CD8-positive, alpha-beta T cell (primary cell): ENCODE measurements at regions of chr5 and their contacts with region 1.

Region 1: GRCh38 chr5:14581333-14581890 is at the start of gene OTULINL:
- DNase-seq: peak; percentile 76 to 94 (median 90)
- ATAC-seq: peak; percentile 88
- H3K4me3 ChIP-seq: peak within 1 kb of the TSS; percentile 69 to 82
- H3K4me3 Mint-ChIP-seq: peak within 1 kb of the TSS; percentile 88
- H3K27ac ChIP-seq: peak within 1 kb of the TSS; percentile 75 to 82
- H3K27ac Mint-ChIP-seq: peak within 1 kb of the TSS; percentile 94
- H3K4me1 ChIP-seq: peaks cover 37% of the 10 kb centered on the region
- H3K4me1 Mint-ChIP-seq: peaks cover 43% of the 10 kb centered on the region
- H3K27me3 ChIP-seq: no peaks in the 10 kb centered on the region
- H3K27me3 Mint-ChIP-seq: no peaks in the 10 kb centered on the region
- CTCF ChIP-seq: no peak
- total RNA-seq, gene OTULINL: 91.8 to 93.1 TPM

Region 2: DNA sequence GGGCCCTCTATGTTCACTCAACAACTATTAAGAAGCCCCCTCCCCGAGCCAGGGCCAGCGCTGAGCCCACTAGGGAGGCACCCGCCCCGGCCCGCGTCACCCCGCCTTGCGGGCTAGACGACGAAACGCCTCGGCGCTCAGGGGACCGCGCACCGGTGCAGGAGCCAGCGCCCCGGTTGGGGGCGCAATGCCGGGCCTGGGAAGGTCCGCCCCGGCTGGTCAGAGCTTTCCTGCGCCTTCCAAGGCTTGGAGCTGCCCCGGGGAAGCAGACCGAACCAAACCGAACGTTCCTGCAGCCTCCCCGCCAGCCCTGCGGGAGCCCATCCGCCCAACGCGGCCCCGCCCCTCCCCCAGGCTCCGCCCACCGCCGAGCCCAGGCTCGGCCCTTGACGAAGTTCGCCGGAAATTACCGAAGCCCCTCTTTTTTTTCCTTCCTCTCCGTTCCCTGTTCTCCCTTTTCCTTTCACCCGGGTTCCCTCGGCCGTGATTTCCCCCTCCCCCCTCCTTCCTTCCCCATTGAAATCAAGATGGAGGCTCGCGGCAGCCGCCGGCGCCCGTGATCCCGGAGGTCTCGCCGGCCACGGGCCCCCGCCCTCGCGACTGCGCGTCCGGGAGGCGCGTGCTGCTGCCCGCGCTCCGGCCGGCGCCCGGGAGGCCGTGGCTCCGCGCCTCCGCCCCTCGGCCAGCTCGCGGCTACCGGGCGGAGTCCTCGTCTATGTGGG is 438.4 kb before region 1 on chr5 and contains the start of gene TRIO:
- CTCF ChIA-PET with region 1: no interaction called
- POLR2A ChIA-PET with region 1: no interaction called
- intact Hi-C with region 1: loop called (anchors 10 kb)
- DNase-seq: peak; percentile 32 to 88 (median 77)
- ATAC-seq: peak; percentile 71
- H3K4me3 ChIP-seq: peak within 1 kb of the TSS; percentile 56 to 93
- H3K4me3 Mint-ChIP-seq: peak within 1 kb of the TSS; percentile 84
- H3K27ac ChIP-seq: no peak within 1 kb of the TSS
- H3K27ac Mint-ChIP-seq: no peak within 1 kb of the TSS
- H3K4me1 ChIP-seq: peaks cover 13% of the 10 kb centered on the region
- H3K4me1 Mint-ChIP-seq: peaks cover 11% of the 10 kb centered on the region
- H3K27me3 ChIP-seq: peaks cover 0 to 3% of the 10 kb centered on the region in 2 experiments
- H3K27me3 Mint-ChIP-seq: peaks cover 40% of the 10 kb centered on the region
- CTCF ChIP-seq: peak; percentile 31
- total RNA-seq, gene TRIO: 3.4 to 6.5 TPM

Region 3: GRCh38 chr5:14410394-14411201 is 170.8 kb before region 1 on chr5:
- CTCF ChIA-PET with region 1: interaction called, 8 read pairs
- POLR2A ChIA-PET with region 1: interaction called, 5 read pairs
- intact Hi-C with region 1: loop called (anchors 2 kb)
- DNase-seq: no peak
- ATAC-seq: no peak
- H3K4me3 ChIP-seq: no peak overlapping the region
- H3K4me3 Mint-ChIP-seq: no peak overlapping the region
- H3K27ac ChIP-seq: no peak overlapping the region
- H3K27ac Mint-ChIP-seq: no peak overlapping the region
- H3K4me1 ChIP-seq: peaks cover 31% of the 10 kb centered on the region
- H3K4me1 Mint-ChIP-seq: peaks cover 35% of the 10 kb centered on the region
- H3K27me3 ChIP-seq: no peaks in the 10 kb centered on the region
- H3K27me3 Mint-ChIP-seq: no peaks in the 10 kb centered on the region
- CTCF ChIP-seq: no peak

Region 4: DNA sequence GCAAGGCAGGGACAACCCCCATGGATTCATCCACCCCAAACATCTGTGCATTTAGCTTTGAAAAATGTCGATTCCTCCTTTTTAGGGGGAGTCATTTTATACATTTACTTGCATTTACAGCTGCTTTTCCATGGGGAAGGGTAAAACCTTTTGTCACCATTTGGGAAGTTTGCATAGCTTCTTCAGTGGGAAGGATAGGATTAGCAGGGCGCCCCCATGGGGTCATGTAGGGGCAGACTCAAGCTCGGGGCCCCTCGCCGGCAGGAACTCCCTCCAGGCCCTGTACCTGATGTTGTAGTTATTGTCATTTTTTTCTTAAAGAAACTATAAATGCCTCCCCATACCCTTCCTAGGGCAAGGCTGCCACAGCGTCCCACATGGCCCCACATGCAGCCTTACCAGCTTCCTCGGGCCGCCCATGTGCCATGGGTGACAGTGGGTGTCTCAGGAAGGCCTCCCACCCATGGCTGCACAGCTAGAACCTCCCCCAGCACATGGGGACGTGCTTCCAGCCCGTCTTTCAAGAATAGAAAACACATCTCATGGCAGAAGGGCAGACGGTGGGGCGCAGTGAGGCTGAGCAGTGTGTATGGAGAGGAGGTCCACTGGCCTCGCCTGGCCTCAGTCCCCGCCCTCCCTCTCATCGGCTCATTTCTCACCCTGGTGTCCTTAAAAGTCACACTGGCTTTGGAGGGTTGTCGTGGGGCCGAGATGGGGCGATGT is 75.9 kb before region 1 on chr5:
- CTCF ChIA-PET with region 1: no interaction called
- POLR2A ChIA-PET with region 1: no interaction called
- intact Hi-C with region 1: no loop called
- DNase-seq: no peak
- ATAC-seq: no peak
- H3K4me3 ChIP-seq: no peak overlapping the region
- H3K4me3 Mint-ChIP-seq: no peak overlapping the region
- H3K27ac ChIP-seq: no peak overlapping the region
- H3K27ac Mint-ChIP-seq: no peak overlapping the region
- H3K4me1 ChIP-seq: no peaks in the 10 kb centered on the region
- H3K4me1 Mint-ChIP-seq: no peaks in the 10 kb centered on the region
- H3K27me3 ChIP-seq: no peaks in the 10 kb centered on the region
- H3K27me3 Mint-ChIP-seq: no peaks in the 10 kb centered on the region
- CTCF ChIP-seq: no peak

Region 5: DNA sequence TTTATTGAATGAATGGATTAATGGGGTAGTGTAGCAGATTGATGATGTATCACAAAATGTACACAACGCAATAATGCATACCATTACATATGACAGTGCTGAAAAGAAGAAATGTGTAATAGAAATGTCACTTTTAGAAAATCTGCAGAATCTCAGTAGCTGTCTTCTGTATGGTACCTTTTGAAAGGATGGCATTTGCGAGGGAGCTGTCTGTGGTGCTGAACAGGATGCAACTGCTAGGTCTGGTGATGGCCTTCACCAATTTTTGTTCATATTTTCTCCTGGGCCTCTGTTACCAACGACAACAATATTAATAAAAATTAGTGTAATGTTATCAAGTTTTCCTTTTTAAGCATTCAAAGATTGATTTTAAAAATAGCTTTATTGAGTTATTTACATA is 46.9 kb after region 1 on chr5:
- CTCF ChIA-PET with region 1: no interaction called
- POLR2A ChIA-PET with region 1: no interaction called
- intact Hi-C with region 1: loop called in 1 of 2 experiments (anchors 5 kb)
- DNase-seq: peak; percentile 28 to 70 (median 65)
- ATAC-seq: peak; percentile 72
- H3K4me3 ChIP-seq: no peak overlapping the region
- H3K4me3 Mint-ChIP-seq: no peak overlapping the region
- H3K27ac ChIP-seq: no peak overlapping the region
- H3K27ac Mint-ChIP-seq: no peak overlapping the region
- H3K4me1 ChIP-seq: no peaks in the 10 kb centered on the region
- H3K4me1 Mint-ChIP-seq: no peaks in the 10 kb centered on the region
- H3K27me3 ChIP-seq: no peaks in the 10 kb centered on the region
- H3K27me3 Mint-ChIP-seq: peaks cover 2% of the 10 kb centered on the region
- CTCF ChIP-seq: no peak

Region 6: GRCh38 chr5:14664302-14665100 is 83.1 kb after region 1 on chr5 and contains the start of gene OTULIN:
- CTCF ChIA-PET with region 1: no interaction called
- POLR2A ChIA-PET with region 1: no interaction called
- intact Hi-C with region 1: loop called (anchors 1 to 5 kb)
- DNase-seq: peak; percentile 62 to 96 (median 85)
- ATAC-seq: peak; percentile 65
- H3K4me3 ChIP-seq: peak within 1 kb of the TSS; percentile 60 to 65
- H3K4me3 Mint-ChIP-seq: peak within 1 kb of the TSS; percentile 95
- H3K27ac ChIP-seq: peak within 1 kb of the TSS; percentile 75 to 89
- H3K27ac Mint-ChIP-seq: peak within 1 kb of the TSS; percentile 97
- H3K4me1 ChIP-seq: peaks cover 50% of the 10 kb centered on the region
- H3K4me1 Mint-ChIP-seq: peaks cover 69% of the 10 kb centered on the region
- H3K27me3 ChIP-seq: no peaks in the 10 kb centered on the region
- H3K27me3 Mint-ChIP-seq: no peaks in the 10 kb centered on the region
- CTCF ChIP-seq: no peak
- total RNA-seq, gene OTULIN: 135 to 140 TPM

Region 7: DNA sequence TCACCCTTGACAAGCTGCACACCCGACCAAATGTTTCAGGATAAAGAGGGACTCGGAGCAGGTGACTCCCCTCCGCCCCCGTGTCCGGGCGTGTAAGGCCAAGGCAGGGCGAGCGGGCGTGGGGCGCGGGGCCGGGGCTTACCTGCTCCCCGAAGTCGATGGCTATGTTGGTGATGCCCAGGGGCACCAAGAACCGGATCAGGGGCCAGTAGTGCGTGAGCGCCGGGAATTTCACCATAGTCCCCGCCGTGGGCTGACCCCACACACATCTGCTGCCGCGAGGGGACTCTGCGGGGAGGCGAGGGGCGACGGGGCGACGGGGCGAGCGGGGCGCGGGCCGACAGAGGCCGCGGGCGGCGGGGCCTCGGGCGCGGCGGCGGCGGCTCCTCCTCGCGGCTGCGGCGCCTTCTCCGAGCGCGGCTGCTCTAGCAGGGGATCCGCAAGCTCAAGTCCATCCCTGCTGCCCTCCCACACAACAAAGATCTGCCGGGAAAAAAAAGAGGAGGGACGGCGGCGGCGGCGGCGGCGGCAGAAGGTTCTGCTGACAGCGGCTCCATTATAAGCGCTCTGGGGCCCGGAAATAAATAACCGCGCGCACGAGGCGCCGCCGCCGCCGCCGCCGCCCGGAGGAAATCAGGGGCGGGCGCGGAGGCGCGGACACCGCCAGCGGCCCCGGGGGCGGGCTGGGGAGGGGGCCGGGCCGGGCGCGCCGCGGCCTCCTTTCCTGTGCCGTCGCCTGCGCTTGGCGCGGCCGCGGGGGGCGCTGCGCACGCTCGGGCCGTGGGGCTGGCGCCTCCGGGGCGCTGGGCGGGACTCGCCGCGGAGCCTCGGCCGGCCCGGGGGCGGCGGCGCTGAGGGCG is 290.0 kb after region 1 on chr5 and contains the start of gene ANKH:
- CTCF ChIA-PET with region 1: no interaction called
- POLR2A ChIA-PET with region 1: no interaction called
- intact Hi-C with region 1: loop called (anchors 5 kb)
- DNase-seq: peak; percentile 66 to 93 (median 81)
- ATAC-seq: peak; percentile 81
- H3K4me3 ChIP-seq: peak within 1 kb of the TSS; percentile 63 to 78
- H3K4me3 Mint-ChIP-seq: peak within 1 kb of the TSS; percentile 95
- H3K27ac ChIP-seq: peak within 1 kb of the TSS; percentile 63 to 66
- H3K27ac Mint-ChIP-seq: peak within 1 kb of the TSS; percentile 94
- H3K4me1 ChIP-seq: peaks cover 13% of the 10 kb centered on the region
- H3K4me1 Mint-ChIP-seq: peaks cover 38% of the 10 kb centered on the region
- H3K27me3 ChIP-seq: no peaks in the 10 kb centered on the region
- H3K27me3 Mint-ChIP-seq: no peaks in the 10 kb centered on the region
- CTCF ChIP-seq: no peak
- total RNA-seq, gene ANKH: 56.0 to 57.7 TPM

Region 8: DNA sequence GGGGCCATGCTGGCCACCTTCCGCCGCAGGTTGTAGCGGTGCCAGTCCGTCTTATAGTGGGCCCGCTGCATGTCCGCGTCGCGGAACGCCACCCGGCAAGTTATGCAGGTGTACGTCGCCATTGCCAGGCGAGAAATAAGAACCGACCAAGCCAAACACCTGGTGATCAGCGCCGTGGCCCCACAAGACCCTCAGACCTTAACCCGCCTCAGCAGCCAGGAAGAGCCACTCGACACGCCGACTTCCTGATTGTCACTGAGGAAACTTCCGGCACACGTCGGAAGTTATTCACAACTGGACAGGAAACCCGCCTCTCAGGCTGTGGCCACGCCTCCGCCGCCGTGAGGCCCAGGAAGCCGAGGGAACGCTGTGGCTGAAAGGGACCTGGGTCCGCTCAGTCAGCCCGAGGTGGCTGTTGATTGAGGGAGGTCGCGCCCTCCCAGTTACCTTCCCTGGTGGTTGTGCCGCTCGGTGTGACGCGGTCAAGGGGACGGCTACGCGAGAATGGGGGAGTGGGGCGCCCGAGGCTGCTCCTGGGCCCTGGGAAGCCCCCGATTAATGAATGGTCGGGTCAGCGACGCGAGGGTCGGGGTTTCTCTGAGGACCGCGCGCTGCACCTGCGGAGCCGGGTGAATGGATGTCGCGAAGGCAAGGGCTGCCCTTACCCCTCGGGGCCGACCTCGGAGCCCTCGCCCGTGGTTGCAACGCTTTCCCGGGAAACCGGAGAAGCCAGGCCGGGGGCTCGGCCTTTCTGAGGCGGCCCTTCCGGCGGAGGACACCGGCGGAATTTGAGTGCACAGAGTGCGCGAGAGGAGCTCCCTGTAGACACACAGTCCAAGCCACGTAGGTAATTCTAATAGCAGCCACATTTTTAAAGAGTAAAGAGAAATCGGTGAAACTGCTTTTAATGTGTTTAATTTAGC is 1884.4 kb after region 1 on chr5 and contains the start of gene ZNF622:
- CTCF ChIA-PET with region 1: no interaction called
- POLR2A ChIA-PET with region 1: no interaction called
- intact Hi-C with region 1: loop called in 1 of 2 experiments (anchors 10 kb)
- DNase-seq: peak; percentile 75 to 95 (median 89)
- ATAC-seq: peak; percentile 91
- H3K4me3 ChIP-seq: peak within 1 kb of the TSS; percentile 80 to 81
- H3K4me3 Mint-ChIP-seq: peak within 1 kb of the TSS; percentile 96
- H3K27ac ChIP-seq: peak within 1 kb of the TSS; percentile 76 to 90
- H3K27ac Mint-ChIP-seq: peak within 1 kb of the TSS; percentile 95
- H3K4me1 ChIP-seq: peaks cover 58% of the 10 kb centered on the region
- H3K4me1 Mint-ChIP-seq: peaks cover 87% of the 10 kb centered on the region
- H3K27me3 ChIP-seq: no peaks in the 10 kb centered on the region
- H3K27me3 Mint-ChIP-seq: no peaks in the 10 kb centered on the region
- CTCF ChIP-seq: no peak
- total RNA-seq, gene ZNF622: 64.8 to 66.1 TPM